ENCODE measurements at regions of chr17 and their contacts with region 1.

Region 1: GRCh38 chr17:43170766-43171585 is at the start of gene NBR1:
- DNase-seq: peak; percentile 99
- ATAC-seq: peak; percentile 77
- H3K4me3 ChIP-seq: peak within 1 kb of the TSS; percentile 70 to 99 (median 90)
- H3K4me3 Mint-ChIP-seq: no peak within 1 kb of the TSS
- H3K27ac ChIP-seq: peak within 1 kb of the TSS; percentile 100
- H3K27ac Mint-ChIP-seq: no peak within 1 kb of the TSS
- H3K4me1 ChIP-seq: peaks cover 20 to 39% of the 10 kb centered on the region in 2 donors
- H3K4me1 Mint-ChIP-seq: peaks cover 28% of the 10 kb centered on the region
- H3K27me3 ChIP-seq: no peaks in the 10 kb centered on the region
- H3K27me3 Mint-ChIP-seq: no peaks in the 10 kb centered on the region
- CTCF ChIP-seq: no peak
- total RNA-seq, gene NBR1: 42.1 and 43.9 TPM in 2 replicates

Region 2: DNA sequence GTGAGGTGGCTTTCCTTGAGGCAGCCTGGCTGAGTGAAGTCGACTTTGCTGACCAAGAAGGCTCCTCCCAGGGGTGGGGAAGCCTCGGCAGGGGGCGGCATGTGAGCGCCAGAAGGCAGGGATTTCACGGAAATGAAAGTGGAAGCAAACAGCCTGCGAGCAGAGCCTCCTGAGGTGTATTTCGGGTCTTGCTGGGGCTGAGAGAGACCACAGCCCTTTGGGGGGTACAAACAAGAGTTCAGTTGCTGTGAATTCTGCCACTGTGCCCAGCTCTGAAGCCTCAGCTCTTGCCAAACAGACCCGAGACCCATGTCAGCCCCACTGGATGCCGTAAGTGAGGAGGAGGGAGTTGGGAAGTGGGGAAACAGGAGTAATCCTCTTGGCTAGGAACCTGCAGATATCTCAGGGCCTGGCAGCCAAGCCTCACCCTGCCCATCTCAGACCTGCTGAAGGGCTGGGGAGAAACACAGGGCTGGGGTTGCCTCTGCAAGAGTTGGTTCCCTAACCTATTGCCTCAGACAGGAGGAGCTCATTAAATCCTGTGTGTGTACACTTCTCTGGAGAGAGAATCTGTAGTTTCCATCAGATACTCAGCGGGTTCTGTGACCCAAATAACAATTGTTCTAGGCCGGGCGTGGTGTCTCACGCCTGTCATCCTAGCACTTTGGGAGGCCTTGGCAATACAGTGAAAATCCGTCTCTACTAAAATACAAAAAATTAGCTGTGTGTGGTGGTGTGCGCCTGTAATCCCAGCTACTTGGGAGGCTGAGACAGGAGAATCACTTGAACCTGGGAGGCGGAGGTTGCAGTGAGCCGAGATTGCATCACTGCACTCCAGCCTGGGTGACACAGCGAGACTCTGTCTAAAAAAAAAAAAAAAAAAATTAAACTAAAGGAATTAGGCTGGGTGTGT is 164.1 kb before region 1 on chr17 and contains the start of gene IFI35:
- CTCF ChIA-PET with region 1: interaction called, 4 read pairs
- POLR2A ChIA-PET with region 1: no interaction called
- intact Hi-C with region 1: loop called (anchors 1 kb)
- DNase-seq: peak; percentile 89
- ATAC-seq: peak; percentile 99
- H3K4me3 ChIP-seq: peak within 1 kb of the TSS; percentile 73 to 91 (median 82)
- H3K4me3 Mint-ChIP-seq: peak within 1 kb of the TSS; percentile 100
- H3K27ac ChIP-seq: peak within 1 kb of the TSS; percentile 83 to 93
- H3K27ac Mint-ChIP-seq: peak within 1 kb of the TSS; percentile 100
- H3K4me1 ChIP-seq: peaks cover 8 to 13% of the 10 kb centered on the region in 2 donors
- H3K4me1 Mint-ChIP-seq: peaks cover 16% of the 10 kb centered on the region
- H3K27me3 ChIP-seq: no peaks in the 10 kb centered on the region
- H3K27me3 Mint-ChIP-seq: no peaks in the 10 kb centered on the region
- CTCF ChIP-seq: peak; percentile 64
- total RNA-seq, gene IFI35: 34.7 and 37.2 TPM in 2 replicates

Region 3: GRCh38 chr17:43062984-43063638 is 107.9 kb before region 1 on chr17:
- CTCF ChIA-PET with region 1: no interaction called
- POLR2A ChIA-PET with region 1: no interaction called
- intact Hi-C with region 1: no loop called
- DNase-seq: no peak
- ATAC-seq: no peak
- H3K4me3 ChIP-seq: no peak overlapping the region
- H3K4me3 Mint-ChIP-seq: no peak overlapping the region
- H3K27ac ChIP-seq: no peak overlapping the region
- H3K27ac Mint-ChIP-seq: no peak overlapping the region
- H3K4me1 ChIP-seq: no peaks in the 10 kb centered on the region
- H3K4me1 Mint-ChIP-seq: no peaks in the 10 kb centered on the region
- H3K27me3 ChIP-seq: no peaks in the 10 kb centered on the region
- H3K27me3 Mint-ChIP-seq: no peaks in the 10 kb centered on the region
- CTCF ChIP-seq: no peak

Region 4: GRCh38 chr17:43125133-43125966 is 45.6 kb before region 1 on chr17 and contains the start of gene BRCA1:
- CTCF ChIA-PET with region 1: no interaction called
- POLR2A ChIA-PET with region 1: interaction called, 9 read pairs
- intact Hi-C with region 1: loop called (anchors 1 kb)
- DNase-seq: peak; percentile 98
- ATAC-seq: peak; percentile 100
- H3K4me3 ChIP-seq: peak within 1 kb of the TSS; percentile 68 to 97 (median 92)
- H3K4me3 Mint-ChIP-seq: peak within 1 kb of the TSS; percentile 91
- H3K27ac ChIP-seq: peak within 1 kb of the TSS; percentile 60 to 82
- H3K27ac Mint-ChIP-seq: peak within 1 kb of the TSS; percentile 91
- H3K4me1 ChIP-seq: peaks cover 12 to 24% of the 10 kb centered on the region in 2 donors
- H3K4me1 Mint-ChIP-seq: peaks cover 31% of the 10 kb centered on the region
- H3K27me3 ChIP-seq: no peaks in the 10 kb centered on the region
- H3K27me3 Mint-ChIP-seq: no peaks in the 10 kb centered on the region
- CTCF ChIP-seq: no peak
- total RNA-seq, gene BRCA1: 7.2 and 9.0 TPM in 2 replicates

Region 5: GRCh38 chr17:43316522-43317142 is 145.7 kb after region 1 on chr17:
- CTCF ChIA-PET with region 1: interaction called, 3 read pairs
- POLR2A ChIA-PET with region 1: interaction called, 25 read pairs
- intact Hi-C with region 1: loop called (anchors 1 kb)
- DNase-seq: peak; percentile 78
- ATAC-seq: no peak
- H3K4me3 ChIP-seq: peak overlapping the region in 1 of 5 experiments; percentile 25
- H3K4me3 Mint-ChIP-seq: peak overlapping the region; percentile 29
- H3K27ac ChIP-seq: peak overlapping the region in 1 of 2 donors; percentile 46
- H3K27ac Mint-ChIP-seq: no peak overlapping the region
- H3K4me1 ChIP-seq: peaks cover 0 to 4% of the 10 kb centered on the region in 2 donors
- H3K4me1 Mint-ChIP-seq: peaks cover 16% of the 10 kb centered on the region
- H3K27me3 ChIP-seq: no peaks in the 10 kb centered on the region
- H3K27me3 Mint-ChIP-seq: no peaks in the 10 kb centered on the region
- CTCF ChIP-seq: no peak

Region 6: DNA sequence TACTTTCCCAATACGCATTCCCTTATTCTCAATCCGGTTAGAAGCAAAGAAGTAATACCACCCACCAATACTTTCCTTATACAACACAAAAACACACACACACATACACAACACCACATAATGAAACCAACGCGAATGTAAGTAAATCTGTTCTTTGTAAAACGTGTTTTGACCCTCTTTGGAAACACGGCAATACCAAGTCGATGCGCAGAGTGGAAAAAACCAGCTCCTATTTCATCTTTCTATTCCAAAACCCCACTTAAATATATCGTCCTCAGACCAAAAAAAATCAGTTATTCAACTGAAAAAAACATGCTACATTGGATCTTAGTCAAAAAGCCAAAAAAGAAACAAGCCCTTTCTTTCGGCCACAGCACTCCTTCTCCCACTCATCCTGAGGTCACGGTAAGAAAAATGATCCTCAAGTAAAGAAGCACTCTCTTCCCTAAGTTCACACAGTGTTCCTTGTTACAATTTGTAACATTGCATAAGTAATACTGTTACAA is 196.8 kb after region 1 on chr17:
- CTCF ChIA-PET with region 1: interaction called, 7 read pairs
- POLR2A ChIA-PET with region 1: interaction called, 7 read pairs
- intact Hi-C with region 1: loop called (anchors 2 kb)
- DNase-seq: no peak
- ATAC-seq: peak; percentile 40
- H3K4me3 ChIP-seq: peak overlapping the region; percentile 59 to 84 (median 64)
- H3K4me3 Mint-ChIP-seq: peak overlapping the region; percentile 99
- H3K27ac ChIP-seq: peak overlapping the region; percentile 96 to 98
- H3K27ac Mint-ChIP-seq: peak overlapping the region; percentile 100
- H3K4me1 ChIP-seq: peaks cover 33 to 50% of the 10 kb centered on the region in 2 donors
- H3K4me1 Mint-ChIP-seq: peaks cover 44% of the 10 kb centered on the region
- H3K27me3 ChIP-seq: no peaks in the 10 kb centered on the region
- H3K27me3 Mint-ChIP-seq: no peaks in the 10 kb centered on the region
- CTCF ChIP-seq: no peak

Measured in B cell (primary cell).